ENCODE measurements at regions of chr12 and their contacts with region 1.

Region 1: DNA sequence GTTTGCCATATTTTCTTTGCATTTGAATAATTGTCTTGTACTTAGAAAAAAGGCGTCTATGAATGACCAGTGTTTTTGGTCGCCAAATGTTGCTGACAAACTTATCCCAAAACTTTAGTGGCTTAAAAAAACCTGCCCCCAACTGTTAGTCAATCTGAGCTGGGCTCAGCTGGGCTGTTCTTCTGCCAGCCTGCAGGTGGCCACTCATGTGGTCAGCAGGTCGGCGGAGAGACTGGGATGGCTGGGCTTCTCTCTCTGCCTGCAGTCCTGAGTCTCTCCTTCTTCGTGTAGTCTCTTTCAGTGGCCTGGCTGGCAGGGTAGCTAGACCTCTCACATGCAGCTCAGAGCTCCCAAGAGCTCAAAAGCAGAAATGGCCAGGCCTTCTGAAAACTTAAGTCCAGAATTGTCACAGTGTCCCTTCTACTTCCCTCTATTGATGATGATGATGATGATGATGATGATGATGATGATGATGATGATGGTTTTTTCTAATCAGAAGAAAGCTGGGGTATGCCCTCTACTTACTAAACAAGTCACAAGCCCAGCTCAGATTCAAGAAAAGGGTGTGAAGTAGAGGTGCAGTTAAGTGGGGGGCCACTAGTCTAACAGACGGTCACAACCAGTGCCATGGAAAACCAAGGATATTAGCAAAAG is 87.9 kb downstream of the PTPN11 start:
- DNase-seq: no peak
- ATAC-seq: no peak
- H3K4me3 ChIP-seq: no peak overlapping the region
- H3K27ac ChIP-seq: no peak overlapping the region
- H3K4me1 ChIP-seq: no peaks in the 10 kb centered on the region
- H3K27me3 ChIP-seq: no peaks in the 10 kb centered on the region
- CTCF ChIP-seq: no peak; the same call in 1 of the 2 replicates

Region 2: DNA sequence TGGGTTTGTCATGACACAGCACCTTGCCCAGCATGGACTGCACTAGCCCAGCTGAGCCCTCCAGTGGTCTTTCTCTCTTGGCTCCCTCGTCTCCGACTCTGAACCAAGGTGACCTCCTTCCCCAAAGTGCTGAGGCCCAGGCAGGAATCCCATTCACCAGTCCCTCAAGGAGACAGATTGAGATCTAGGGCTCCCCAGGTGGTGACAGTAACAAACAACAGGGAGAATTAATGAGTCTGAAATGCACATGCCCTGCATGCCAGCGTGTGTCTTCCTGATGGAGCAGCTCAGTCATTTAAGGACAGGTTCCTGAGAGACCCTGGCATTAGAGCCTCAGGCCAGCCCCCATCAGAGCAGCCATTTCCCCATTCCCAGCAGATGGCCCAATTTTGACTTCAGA is 348.7 kb after region 1 on chr12:
- CTCF ChIA-PET with region 1: no interaction called
- POLR2A ChIA-PET with region 1: interaction called, 11 read pairs
- intact Hi-C with region 1: no loop called
- DNase-seq: peak; percentile 45
- ATAC-seq: peak; percentile 63; the same call in 1 of the 2 replicates
- H3K4me3 ChIP-seq: no peak overlapping the region
- H3K27ac ChIP-seq: no peak overlapping the region
- H3K4me1 ChIP-seq: peaks cover 7% of the 10 kb centered on the region
- H3K27me3 ChIP-seq: peaks cover 6% of the 10 kb centered on the region; the same call in 1 of the 2 replicates
- CTCF ChIP-seq: peak; percentile 67

Measured in PC-3 (cell line).